ENCODE measurements at regions of chr21 and their contacts with region 1.

Region 1: DNA sequence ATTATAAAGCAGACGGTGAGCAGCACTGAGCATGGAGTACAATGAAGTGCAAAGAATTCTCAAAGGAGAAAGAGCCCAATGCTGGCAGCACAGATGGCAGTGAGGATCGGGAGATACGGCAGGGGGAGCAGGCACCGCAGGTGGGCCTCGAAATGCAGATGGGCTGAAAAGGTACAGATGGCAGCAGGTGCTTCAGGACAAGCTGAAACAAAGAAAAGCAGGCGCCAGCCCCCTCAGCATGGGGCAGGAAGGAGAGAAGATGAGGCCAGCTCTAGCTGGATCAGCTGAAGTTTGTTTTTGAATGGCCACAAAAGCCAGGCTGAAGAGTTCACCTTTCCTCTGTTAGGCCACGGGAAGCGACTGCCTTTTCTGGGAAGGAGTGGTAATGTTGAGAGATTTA is 7.7 kb downstream of the CFAP298 start:
- DNase-seq: no peak
- H3K4me3 ChIP-seq: no peak overlapping the region
- H3K27ac ChIP-seq: no peak overlapping the region
- H3K4me1 ChIP-seq: no peaks in the 10 kb centered on the region
- H3K27me3 ChIP-seq: no peaks in the 10 kb centered on the region
- CTCF ChIP-seq: no peak
- EP300 ChIP-seq: no peak
- POLR2A ChIP-seq: no peak

Region 2: GRCh38 chr21:32278518-32279376 is 325.7 kb before region 1 on chr21 and contains the start of gene MIS18A:
- intact Hi-C with region 1: loop called (anchors 10 kb)
- DNase-seq: peak; percentile 97
- H3K4me3 ChIP-seq: peak within 1 kb of the TSS; percentile 49 to 92 (median 78)
- H3K27ac ChIP-seq: peak within 1 kb of the TSS; percentile 71 to 73 (median 72)
- H3K4me1 ChIP-seq: peaks cover 0 to 20% (median 20%) of the 10 kb centered on the region in 4 donors
- H3K27me3 ChIP-seq: no peaks in the 10 kb centered on the region
- CTCF ChIP-seq: no peak
- EP300 ChIP-seq: no peak
- POLR2A ChIP-seq: peak in 1 of 2 donors; percentile 36
- total RNA-seq, gene MIS18A: 2.4 to 6.4 (median 4.4) TPM

Measured in sigmoid colon (tissue), 7 donors.